ENCODE measurements at regions of chr20 and their contacts with region 1.

Region 1: GRCh38 chr20:21235484-21236445 is 67.4 kb upstream of the XRN2 start:
- DNase-seq: peak; percentile 43 to 87 (median 82)
- H3K4me3 ChIP-seq: peak overlapping the region in 54 of 59 donors; percentile 1 to 59 (median 32)
- H3K27ac ChIP-seq: peak overlapping the region; percentile 44 to 99 (median 93)
- H3K27me3 ChIP-seq: no peaks in the 10 kb centered on the region
- CTCF ChIP-seq: peak; percentile 60 to 95 (median 82)

Region 2: GRCh38 chr20:20860078-20860806 is 375.5 kb before region 1 on chr20:
- intact Hi-C with region 1: loop called in 1 of 2 experiments (anchors 5 kb)
- DNase-seq: peak; percentile 76 to 97 (median 91)
- H3K4me3 ChIP-seq: peak overlapping the region in 1 of 59 donors; percentile 5
- H3K27ac ChIP-seq: peak overlapping the region in 1 of 59 donors; percentile 57
- H3K27me3 ChIP-seq: peaks cover 0 to 15% (median 0%) of the 10 kb centered on the region in 45 donors
- CTCF ChIP-seq: peak; percentile 84 to 100 (median 98)

Region 3: GRCh38 chr20:21020659-21021471 is 214.9 kb before region 1 on chr20:
- intact Hi-C with region 1: no loop called
- DNase-seq: no peak
- H3K4me3 ChIP-seq: no peak overlapping the region
- H3K27ac ChIP-seq: no peak overlapping the region
- H3K27me3 ChIP-seq: peaks cover 0 to 43% (median 18%) of the 10 kb centered on the region in 45 donors
- CTCF ChIP-seq: no peak

Region 4: GRCh38 chr20:21099751-21100577 is 135.8 kb before region 1 on chr20:
- intact Hi-C with region 1: loop called in 1 of 2 experiments (anchors 5 kb)
- DNase-seq: peak in 4 of 10 donors; percentile 18 to 53 (median 43)
- H3K4me3 ChIP-seq: peak overlapping the region; percentile 29 to 76 (median 57)
- H3K27ac ChIP-seq: peak overlapping the region in 52 of 59 donors; percentile 3 to 84 (median 60)
- H3K27me3 ChIP-seq: peaks cover 3 to 95% (median 72%) of the 10 kb centered on the region in 45 donors
- CTCF ChIP-seq: peak in 4 of 56 donors; percentile 6 to 27 (median 13)

Region 5: GRCh38 chr20:21182832-21183563 is 52.8 kb before region 1 on chr20:
- intact Hi-C with region 1: no loop called
- DNase-seq: peak in 2 of 10 donors; percentile 12
- H3K4me3 ChIP-seq: no peak overlapping the region
- H3K27ac ChIP-seq: peak overlapping the region in 12 of 59 donors; percentile 7 to 66 (median 44)
- H3K27me3 ChIP-seq: no peaks in the 10 kb centered on the region
- CTCF ChIP-seq: no peak

Region 6: GRCh38 chr20:21262812-21263211 is 27.0 kb after region 1 on chr20:
- intact Hi-C with region 1: no loop called
- DNase-seq: no peak
- H3K4me3 ChIP-seq: no peak overlapping the region
- H3K27ac ChIP-seq: no peak overlapping the region
- H3K27me3 ChIP-seq: no peaks in the 10 kb centered on the region
- CTCF ChIP-seq: no peak

Region 7: DNA sequence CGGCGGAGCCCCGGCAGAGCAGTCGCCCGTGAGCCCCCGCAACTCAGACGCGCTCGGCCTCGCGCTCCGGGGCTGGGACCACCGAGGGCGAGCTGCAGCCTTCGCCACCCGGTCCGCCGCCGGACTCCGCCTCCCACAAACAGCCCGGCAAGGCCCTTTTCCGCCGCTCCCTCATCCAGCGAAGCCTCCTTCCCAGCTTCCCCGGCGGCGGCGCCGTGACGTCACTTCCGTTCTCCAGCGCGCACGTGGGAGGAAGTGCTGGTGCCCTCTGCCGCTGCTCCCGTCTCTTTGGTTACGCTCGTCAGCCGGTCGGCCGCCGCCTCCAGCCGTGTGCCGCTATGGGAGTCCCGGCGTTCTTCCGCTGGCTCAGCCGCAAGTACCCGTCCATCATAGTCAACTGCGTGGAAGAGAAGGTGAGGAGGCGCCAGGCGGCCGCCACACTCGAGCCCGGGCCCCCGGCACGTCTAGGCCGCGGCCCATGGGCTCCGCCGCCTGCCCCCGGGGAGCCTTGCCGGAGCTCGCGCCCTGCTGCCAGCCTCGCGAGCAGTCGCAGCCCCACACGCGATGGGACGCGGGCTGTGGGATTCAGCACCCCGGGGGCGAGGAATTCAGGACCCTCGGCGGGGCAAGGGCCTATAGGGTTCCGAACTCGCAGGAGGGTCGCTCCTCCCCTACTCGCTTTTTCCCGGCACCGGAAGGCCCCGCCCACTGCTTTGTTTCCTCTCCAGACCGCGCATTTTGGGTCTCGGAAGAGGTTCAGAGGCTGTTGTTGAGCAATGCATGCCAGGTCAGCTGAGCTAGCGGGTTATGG is 67.5 kb after region 1 on chr20 and contains the start of gene XRN2:
- intact Hi-C with region 1: loop called (anchors 5 kb)
- DNase-seq: peak; percentile 86 to 98 (median 94)
- H3K4me3 ChIP-seq: peak within 1 kb of the TSS; percentile 72 to 100 (median 97)
- H3K27ac ChIP-seq: peak within 1 kb of the TSS; percentile 75 to 98 (median 94)
- H3K27me3 ChIP-seq: no peaks in the 10 kb centered on the region
- CTCF ChIP-seq: peak in 51 of 56 donors; percentile 14 to 73 (median 52)
- total RNA-seq, gene XRN2: 22.9 to 32.8 (median 27.2) TPM

Region 8: GRCh38 chr20:21615617-21616080 is 379.9 kb after region 1 on chr20:
- intact Hi-C with region 1: loop called (anchors 2 to 5 kb)
- DNase-seq: peak; percentile 57 to 92 (median 86)
- H3K4me3 ChIP-seq: peak overlapping the region in 3 of 59 donors; percentile 3 to 22 (median 12)
- H3K27ac ChIP-seq: peak overlapping the region; percentile 38 to 98 (median 89)
- H3K27me3 ChIP-seq: peaks cover 0 to 12% (median 0%) of the 10 kb centered on the region in 45 donors
- CTCF ChIP-seq: peak; percentile 60 to 95 (median 86)

Measured in dorsolateral prefrontal cortex (tissue), 120 donors.